ENCODE measurements at regions of chr7 and their contacts with region 1.

Region 1: DNA sequence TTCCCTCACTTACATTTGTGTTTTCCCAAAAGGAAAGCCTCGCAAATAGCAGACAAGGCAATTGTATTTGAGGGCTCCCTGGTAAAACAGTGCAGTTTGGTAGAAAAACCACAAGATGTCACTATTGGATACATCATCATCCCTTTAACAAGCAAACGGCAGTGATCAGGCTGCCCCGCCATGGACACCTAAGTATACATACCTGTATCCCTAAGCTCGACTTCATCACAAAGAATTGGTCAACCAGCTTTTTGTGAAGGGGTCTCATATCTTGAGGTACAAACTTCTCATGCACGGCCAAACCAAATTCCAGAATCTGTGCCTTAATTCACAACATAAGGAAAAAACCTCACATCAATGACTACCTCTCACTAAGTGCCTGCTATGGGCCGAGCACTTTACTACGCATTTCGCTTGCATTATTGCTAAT is 179.5 kb upstream of the IMMP2L start:
- DNase-seq: peak; percentile 61
- ATAC-seq: peak; percentile 92
- H3K4me3 ChIP-seq: no peak overlapping the region
- H3K27ac ChIP-seq: no peak overlapping the region
- H3K4me1 ChIP-seq: peaks cover 7% of the 10 kb centered on the region
- H3K27me3 ChIP-seq: no peaks in the 10 kb centered on the region
- CTCF ChIP-seq: peak; percentile 75
- EP300 ChIP-seq: no peak
- POLR2A ChIP-seq: no peak
- RAD21 ChIP-seq: peak; percentile 53; the same call in 1 of the 2 replicates

Region 2: GRCh38 chr7:111098011-111098925 is 643.6 kb before region 1 on chr7:
- CTCF ChIA-PET with region 1: no interaction called
- POLR2A ChIA-PET with region 1: no interaction called
- in situ Hi-C with region 1: loop called (anchors 25 kb)
- intact Hi-C with region 1: no loop called
- DNase-seq: peak; percentile 20
- ATAC-seq: peak; percentile 68
- H3K4me3 ChIP-seq: no peak overlapping the region
- H3K27ac ChIP-seq: no peak overlapping the region
- H3K4me1 ChIP-seq: no peaks in the 10 kb centered on the region
- H3K27me3 ChIP-seq: no peaks in the 10 kb centered on the region
- CTCF ChIP-seq: peak; percentile 77
- EP300 ChIP-seq: no peak
- POLR2A ChIP-seq: no peak
- RAD21 ChIP-seq: peak; percentile 33; the same call in 1 of the 2 replicates

Region 3: DNA sequence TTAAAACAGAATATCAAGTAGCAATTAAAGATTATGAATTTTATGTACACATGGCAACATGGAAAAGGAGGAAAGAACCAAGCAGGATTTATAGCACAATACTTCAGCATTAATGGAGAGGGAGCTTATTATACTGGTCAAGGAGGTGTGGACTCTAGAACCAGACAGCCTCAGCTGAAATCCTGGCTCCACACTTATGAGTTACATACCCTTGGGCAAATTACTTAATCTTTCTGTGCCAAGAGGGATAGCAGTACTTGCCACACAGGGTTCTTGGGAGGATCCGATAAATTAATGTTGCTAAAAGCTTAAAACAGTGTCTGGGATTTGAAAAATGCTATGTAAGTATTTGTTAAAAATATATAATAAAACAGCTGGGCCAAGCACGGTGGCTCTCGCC is 443.7 kb before region 1 on chr7:
- CTCF ChIA-PET with region 1: no interaction called
- POLR2A ChIA-PET with region 1: no interaction called
- in situ Hi-C with region 1: no loop called
- intact Hi-C with region 1: no loop called
- DNase-seq: no peak
- ATAC-seq: no peak
- H3K4me3 ChIP-seq: no peak overlapping the region
- H3K27ac ChIP-seq: no peak overlapping the region
- H3K4me1 ChIP-seq: no peaks in the 10 kb centered on the region
- H3K27me3 ChIP-seq: no peaks in the 10 kb centered on the region
- CTCF ChIP-seq: no peak
- EP300 ChIP-seq: no peak
- POLR2A ChIP-seq: no peak
- RAD21 ChIP-seq: no peak

Region 4: DNA sequence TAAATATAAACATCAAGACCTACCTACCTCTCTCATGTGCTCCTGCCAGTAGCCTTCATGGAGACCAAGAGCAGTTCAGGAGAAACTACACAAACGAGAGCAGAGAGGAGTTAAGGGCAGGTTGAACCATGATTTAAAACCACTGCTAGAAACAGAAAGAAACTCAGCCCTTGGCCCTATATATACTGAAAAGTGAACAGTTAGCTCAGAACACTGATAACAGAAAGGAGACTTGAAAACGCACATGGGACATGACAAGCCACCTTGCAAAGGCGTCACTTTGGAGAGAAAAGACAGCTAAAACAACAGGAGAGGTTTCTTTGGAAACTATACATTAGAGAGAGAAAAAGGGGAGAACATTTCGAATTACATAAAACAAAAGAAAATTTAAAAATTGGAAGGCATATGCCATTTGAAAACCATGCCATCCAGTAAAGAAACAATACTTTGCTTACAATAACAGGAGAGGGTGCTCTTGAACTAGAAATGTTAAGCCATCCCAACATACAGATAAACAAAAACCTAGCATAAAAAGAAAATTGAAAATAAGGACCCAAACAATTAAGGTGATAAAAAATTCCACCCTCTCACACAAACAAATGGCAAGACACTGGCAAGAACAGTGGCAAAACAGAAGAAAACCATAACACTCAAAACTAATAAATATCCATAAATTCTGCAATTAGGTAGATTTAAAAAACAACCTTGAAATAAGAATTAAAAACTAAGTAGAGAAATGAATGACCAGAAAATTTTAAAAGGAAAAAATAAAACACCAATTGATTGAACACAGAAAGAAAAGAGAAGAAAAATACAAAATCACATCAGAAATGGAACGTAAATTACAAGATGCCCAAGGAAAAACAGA is 412.2 kb before region 1 on chr7:
- CTCF ChIA-PET with region 1: no interaction called
- POLR2A ChIA-PET with region 1: no interaction called
- in situ Hi-C with region 1: loop called (anchors 25 kb)
- intact Hi-C with region 1: loop called (anchors 5 kb)
- DNase-seq: no peak
- ATAC-seq: no peak
- H3K4me3 ChIP-seq: no peak overlapping the region
- H3K27ac ChIP-seq: no peak overlapping the region
- H3K4me1 ChIP-seq: no peaks in the 10 kb centered on the region
- H3K27me3 ChIP-seq: no peaks in the 10 kb centered on the region
- CTCF ChIP-seq: no peak
- EP300 ChIP-seq: no peak
- POLR2A ChIP-seq: no peak
- RAD21 ChIP-seq: no peak

Region 5: DNA sequence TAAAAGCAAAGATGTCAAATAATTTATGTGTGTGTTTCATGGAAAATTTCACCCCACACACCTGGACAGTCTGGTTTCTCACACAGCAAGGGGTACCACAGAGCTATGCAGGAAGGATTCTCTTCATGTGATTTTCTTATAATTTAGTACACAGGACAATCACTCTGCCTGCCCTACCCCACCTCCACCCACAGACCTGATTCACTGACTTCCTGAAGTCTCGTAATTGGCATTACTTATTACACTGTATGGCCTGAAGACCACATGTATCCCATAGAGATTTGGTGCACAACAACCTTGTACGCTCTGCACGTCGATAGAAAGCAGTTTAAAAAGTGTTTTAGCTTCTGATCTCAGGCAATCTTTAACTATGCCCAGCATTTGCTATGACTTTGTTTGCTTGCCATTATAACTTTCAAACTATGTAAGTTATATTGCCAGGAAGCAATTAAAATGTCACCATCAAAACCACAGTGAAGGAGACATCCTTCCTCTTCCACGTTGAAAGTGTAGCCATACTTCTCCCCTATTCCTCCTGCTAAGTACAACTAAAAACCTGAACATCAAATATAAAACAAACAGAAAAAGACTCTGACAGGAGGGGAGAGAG is 99.9 kb after region 1 on chr7:
- CTCF ChIA-PET with region 1: no interaction called
- POLR2A ChIA-PET with region 1: no interaction called
- in situ Hi-C with region 1: no loop called
- intact Hi-C with region 1: no loop called
- DNase-seq: no peak
- ATAC-seq: no peak
- H3K4me3 ChIP-seq: no peak overlapping the region
- H3K27ac ChIP-seq: no peak overlapping the region
- H3K4me1 ChIP-seq: peaks cover 13% of the 10 kb centered on the region
- H3K27me3 ChIP-seq: no peaks in the 10 kb centered on the region
- CTCF ChIP-seq: no peak
- EP300 ChIP-seq: no peak
- POLR2A ChIP-seq: no peak
- RAD21 ChIP-seq: no peak

Region 6: GRCh38 chr7:111855161-111855856 is 113.5 kb after region 1 on chr7:
- CTCF ChIA-PET with region 1: interaction called, 9 read pairs
- POLR2A ChIA-PET with region 1: no interaction called
- in situ Hi-C with region 1: no loop called
- intact Hi-C with region 1: loop called (anchors 1 kb)
- DNase-seq: peak; percentile 21
- ATAC-seq: peak; percentile 87
- H3K4me3 ChIP-seq: no peak overlapping the region
- H3K27ac ChIP-seq: no peak overlapping the region
- H3K4me1 ChIP-seq: no peaks in the 10 kb centered on the region
- H3K27me3 ChIP-seq: no peaks in the 10 kb centered on the region
- CTCF ChIP-seq: peak; percentile 66
- EP300 ChIP-seq: no peak
- POLR2A ChIP-seq: no peak
- RAD21 ChIP-seq: no peak

Region 7: DNA sequence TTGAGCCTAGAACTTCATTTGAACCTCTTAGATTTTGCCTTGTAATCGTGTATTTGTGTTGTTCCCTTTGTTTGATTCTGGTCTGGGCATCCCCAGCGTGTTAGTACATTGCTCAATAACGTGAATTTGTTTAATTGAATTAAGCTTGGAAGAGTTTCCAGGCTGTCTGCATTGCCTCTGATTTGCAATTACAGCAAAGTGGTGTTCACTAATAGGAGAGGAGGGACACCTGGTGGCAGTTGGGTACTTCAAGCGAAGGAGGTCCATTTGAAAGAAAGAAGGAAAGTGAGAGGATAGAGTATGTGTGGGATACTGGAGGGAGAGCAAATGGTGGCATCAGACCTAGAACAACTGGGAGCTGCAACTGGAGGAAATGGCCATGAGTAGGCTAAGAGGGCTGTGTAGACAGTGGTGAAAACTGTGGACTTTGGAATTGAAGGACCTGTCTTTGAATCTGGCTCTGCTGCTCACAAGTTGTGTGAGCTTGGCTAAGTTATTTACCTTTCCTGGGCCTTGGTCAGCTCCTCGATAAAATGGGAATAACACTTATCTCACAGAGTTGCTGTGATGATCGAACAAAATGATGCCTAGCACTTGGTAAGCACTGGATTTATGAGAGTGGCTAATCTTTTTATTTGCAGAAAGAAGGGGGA is 754.1 kb after region 1 on chr7:
- CTCF ChIA-PET with region 1: interaction called, 11 read pairs
- POLR2A ChIA-PET with region 1: no interaction called
- in situ Hi-C with region 1: loop called (anchors 10 kb)
- intact Hi-C with region 1: loop called (anchors 1 kb)
- DNase-seq: peak; percentile 48
- ATAC-seq: peak; percentile 91
- H3K4me3 ChIP-seq: no peak overlapping the region
- H3K27ac ChIP-seq: no peak overlapping the region
- H3K4me1 ChIP-seq: peaks cover 10% of the 10 kb centered on the region; the same call in 1 of the 2 replicates
- H3K27me3 ChIP-seq: no peaks in the 10 kb centered on the region; a peak in 1 of 5 replicates
- CTCF ChIP-seq: peak; percentile 79
- EP300 ChIP-seq: no peak
- POLR2A ChIP-seq: no peak
- RAD21 ChIP-seq: peak; percentile 65; the same call in 1 of the 2 replicates

Measured in HepG2 (cell line).